Heart left ventricle (tissue), 16 donors: ENCODE measurements at regions of chr13 and their contacts with region 1.

Region 1: GRCh38 chr13:101080616-101081015 is 335.7 kb downstream of the NALCN start:
- DNase-seq: no peak
- ATAC-seq: no peak
- H3K4me3 ChIP-seq: no peak overlapping the region
- H3K27ac ChIP-seq: no peak overlapping the region
- H3K4me1 ChIP-seq: no peaks in the 10 kb centered on the region
- H3K27me3 ChIP-seq: no peaks in the 10 kb centered on the region
- CTCF ChIP-seq: no peak
- POLR2A ChIP-seq: no peak

Region 2: DNA sequence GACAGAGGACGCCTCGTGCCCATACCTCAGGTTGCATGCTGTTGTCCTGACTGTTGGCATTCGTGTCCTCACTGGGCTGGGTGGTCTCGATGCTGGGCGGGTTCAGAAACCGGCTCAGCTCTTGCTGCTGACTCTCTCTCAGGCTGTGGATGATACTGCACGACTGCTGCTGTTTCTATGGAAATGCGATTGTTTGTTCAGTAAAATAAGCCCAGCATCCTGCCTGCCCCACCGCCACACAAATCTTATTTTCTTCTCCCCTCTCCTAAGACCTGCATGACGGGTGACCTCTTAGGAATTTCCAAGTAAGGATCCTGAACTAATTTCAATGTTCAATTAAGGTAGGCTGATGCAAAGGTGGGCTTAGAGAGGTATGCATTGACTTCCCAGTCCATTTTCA is 20.8 kb before region 1 on chr13:
- intact Hi-C with region 1: loop called in 1 of 10 experiments (anchors 2 kb)
- DNase-seq: no peak
- ATAC-seq: no peak
- H3K4me3 ChIP-seq: no peak overlapping the region
- H3K27ac ChIP-seq: no peak overlapping the region
- H3K4me1 ChIP-seq: no peaks in the 10 kb centered on the region
- H3K27me3 ChIP-seq: no peaks in the 10 kb centered on the region
- CTCF ChIP-seq: no peak
- POLR2A ChIP-seq: no peak